Aorta (tissue), 5 donors: ENCODE measurements at regions of chr12 and their contacts with region 1.

Region 1: GRCh38 chr12:125049093-125049458 is 16.2 kb upstream of the AACS start:
- DNase-seq: no peak
- ATAC-seq: no peak
- H3K4me3 ChIP-seq: peak overlapping the region; percentile 43 to 44
- H3K27ac ChIP-seq: no peak overlapping the region
- H3K4me1 ChIP-seq: no peaks in the 10 kb centered on the region
- H3K27me3 ChIP-seq: no peaks in the 10 kb centered on the region

Region 2: DNA sequence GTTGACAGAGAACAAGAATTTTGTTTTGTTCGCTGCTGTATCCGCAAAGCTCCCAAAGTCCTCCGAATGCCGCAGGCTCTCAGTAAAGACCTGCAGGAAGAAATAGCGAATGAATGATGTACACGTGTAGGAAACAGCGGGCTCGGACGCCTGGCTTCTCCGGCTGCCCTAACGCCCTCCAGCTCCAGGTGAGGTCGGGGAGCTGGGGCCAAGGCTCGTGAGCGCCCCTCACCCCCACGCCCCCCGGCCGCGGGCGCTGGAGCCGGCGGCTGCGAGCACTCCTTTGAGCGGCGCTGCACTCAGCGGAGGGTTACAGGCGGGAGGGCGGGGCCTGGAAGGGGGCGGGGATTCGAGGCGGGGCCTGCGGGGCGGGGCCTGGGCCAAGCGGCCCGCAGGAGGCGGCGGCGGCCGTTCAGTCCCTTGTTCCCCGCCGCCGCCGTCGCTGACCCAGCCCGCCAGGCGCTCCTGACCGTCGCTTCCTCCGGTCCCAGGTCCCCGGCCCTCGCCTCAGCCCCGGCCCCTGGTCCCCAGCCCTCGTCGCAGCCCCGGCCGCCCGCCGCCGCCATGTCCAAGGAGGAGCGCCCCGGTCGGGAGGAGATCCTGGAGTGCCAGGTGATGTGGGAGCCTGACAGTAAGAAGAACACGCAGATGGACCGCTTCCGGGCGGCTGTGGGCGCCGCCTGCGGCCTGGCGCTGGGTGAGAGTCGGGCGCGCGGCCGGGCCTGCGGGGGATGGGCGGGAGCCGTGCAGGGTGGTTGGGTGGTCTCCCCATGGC is 16.1 kb after region 1 on chr12 and contains the start of gene AACS:
- intact Hi-C with region 1: loop called in 1 of 2 experiments (anchors 1 kb)
- DNase-seq: peak; percentile 83 to 93
- ATAC-seq: peak; percentile 97
- H3K4me3 ChIP-seq: peak within 1 kb of the TSS; percentile 82 to 84
- H3K27ac ChIP-seq: no peak within 1 kb of the TSS
- H3K4me1 ChIP-seq: no peaks in the 10 kb centered on the region
- H3K27me3 ChIP-seq: no peaks in the 10 kb centered on the region
- total RNA-seq, gene AACS: 16.6 to 27.4 TPM